Naive thymus-derived CD4-positive, alpha-beta T cell (primary cell): ENCODE measurements at regions of chr3 and their contacts with region 1.

Region 1: GRCh38 chr3:111071257-111072015 is at the start of gene NECTIN3:
- DNase-seq: peak; percentile 59 to 89 (median 80)
- ATAC-seq: peak; percentile 96
- H3K4me3 ChIP-seq: peak within 1 kb of the TSS; percentile 76
- H3K4me3 Mint-ChIP-seq: peak within 1 kb of the TSS; percentile 90 to 98 (median 94)
- H3K27ac ChIP-seq: peak within 1 kb of the TSS; percentile 52
- H3K27ac Mint-ChIP-seq: peak within 1 kb of the TSS; percentile 63 to 91 (median 87)
- H3K4me1 ChIP-seq: peaks cover 9% of the 10 kb centered on the region in 2 donors
- H3K4me1 Mint-ChIP-seq: peaks cover 24 to 34% (median 26%) of the 10 kb centered on the region in 7 donors
- H3K27me3 ChIP-seq: peaks cover 0 to 6% of the 10 kb centered on the region in 2 donors
- H3K27me3 Mint-ChIP-seq: peaks cover 29 to 64% (median 36%) of the 10 kb centered on the region in 5 donors
- total RNA-seq, gene NECTIN3: 2.4 to 7.2 (median 4.6) TPM

Region 2: DNA sequence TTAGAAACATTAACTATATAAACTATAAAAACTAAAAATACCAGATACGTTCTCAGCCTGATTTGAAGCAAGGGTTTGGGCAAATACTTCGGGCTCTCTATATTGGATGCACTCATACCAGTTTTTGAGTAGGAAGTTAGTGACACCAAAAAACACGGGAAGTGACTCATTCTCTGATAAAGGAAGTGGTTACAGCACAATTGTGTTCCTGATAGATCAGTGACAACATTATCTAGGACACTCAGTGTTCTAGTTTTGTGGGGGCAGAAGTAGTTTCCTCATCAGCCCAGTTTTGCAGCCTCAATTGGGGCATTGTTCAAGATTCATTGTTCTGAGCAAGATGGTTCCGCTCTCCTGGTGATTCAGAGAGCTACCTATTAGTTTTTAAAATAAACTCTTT is 1264.5 kb before region 1 on chr3:
- CTCF ChIA-PET with region 1: no interaction called
- POLR2A ChIA-PET with region 1: no interaction called
- intact Hi-C with region 1: loop called in 1 of 2 experiments (anchors 5 kb)
- DNase-seq: peak in 8 of 9 donors; percentile 28 to 76 (median 66)
- ATAC-seq: peak; percentile 94
- H3K4me3 ChIP-seq: peak overlapping the region; percentile 4
- H3K4me3 Mint-ChIP-seq: peak overlapping the region; percentile 14 to 88 (median 76)
- H3K27ac ChIP-seq: peak overlapping the region; percentile 52
- H3K27ac Mint-ChIP-seq: peak overlapping the region; percentile 85 to 97 (median 89)
- H3K4me1 ChIP-seq: peaks cover 29 to 44% of the 10 kb centered on the region in 2 donors
- H3K4me1 Mint-ChIP-seq: peaks cover 18 to 62% (median 46%) of the 10 kb centered on the region in 7 donors
- H3K27me3 ChIP-seq: no peaks in the 10 kb centered on the region
- H3K27me3 Mint-ChIP-seq: peaks cover 0 to 7% (median 0%) of the 10 kb centered on the region in 5 donors

Region 3: DNA sequence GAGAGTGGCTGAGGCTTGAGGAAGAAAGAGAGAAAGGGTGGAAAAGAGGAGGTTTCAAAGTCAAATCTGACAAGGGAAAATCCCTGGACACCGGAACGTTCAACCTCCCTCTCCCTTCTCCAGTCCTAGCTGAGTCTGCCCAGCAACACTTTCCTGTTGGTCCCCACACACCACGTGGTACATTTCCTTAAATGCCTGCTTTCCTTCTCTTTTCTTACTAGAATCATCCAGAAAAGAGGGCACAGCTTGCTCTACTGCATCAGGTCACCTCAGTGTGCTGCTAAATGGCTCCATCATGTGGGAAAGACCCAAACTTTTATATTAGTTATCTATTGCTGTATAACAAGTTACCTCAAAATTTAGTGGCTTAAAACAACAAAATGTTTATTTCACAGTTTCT is 181.3 kb after region 1 on chr3:
- CTCF ChIA-PET with region 1: no interaction called
- POLR2A ChIA-PET with region 1: no interaction called
- intact Hi-C with region 1: loop called in 1 of 2 experiments (anchors 5 kb)
- DNase-seq: no peak
- ATAC-seq: no peak
- H3K4me3 ChIP-seq: no peak overlapping the region
- H3K4me3 Mint-ChIP-seq: no peak overlapping the region
- H3K27ac ChIP-seq: no peak overlapping the region
- H3K27ac Mint-ChIP-seq: no peak overlapping the region
- H3K4me1 ChIP-seq: no peaks in the 10 kb centered on the region
- H3K4me1 Mint-ChIP-seq: peaks cover 0 to 29% (median 5%) of the 10 kb centered on the region in 7 donors
- H3K27me3 ChIP-seq: no peaks in the 10 kb centered on the region
- H3K27me3 Mint-ChIP-seq: peaks cover 0 to 13% (median 0%) of the 10 kb centered on the region in 5 donors

Region 4: DNA sequence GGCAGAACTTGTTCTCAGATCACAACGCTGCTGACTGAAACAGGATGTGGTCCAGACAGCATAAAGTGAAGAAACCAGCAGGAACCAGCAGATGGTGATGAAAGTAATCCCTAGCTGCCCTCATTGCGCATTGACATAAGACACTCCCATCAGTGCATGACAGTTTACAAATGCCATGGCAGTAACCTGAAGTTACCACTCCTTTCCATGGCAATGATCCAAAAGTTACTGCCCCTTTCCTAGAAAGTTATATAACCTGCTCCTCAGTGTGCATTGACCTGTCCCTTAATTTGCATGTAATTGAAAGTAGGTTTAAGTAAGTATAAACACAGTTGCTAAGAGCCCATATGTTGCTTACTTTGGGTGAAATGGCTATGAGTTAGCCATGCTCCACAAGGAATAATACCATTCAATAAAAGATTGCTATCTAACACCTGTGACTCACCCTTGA is 321.5 kb after region 1 on chr3:
- CTCF ChIA-PET with region 1: no interaction called
- POLR2A ChIA-PET with region 1: no interaction called
- intact Hi-C with region 1: loop called in 1 of 2 experiments (anchors 2 kb)
- DNase-seq: peak in 7 of 9 donors; percentile 40 to 78 (median 75)
- ATAC-seq: peak; percentile 99
- H3K4me3 ChIP-seq: no peak overlapping the region
- H3K4me3 Mint-ChIP-seq: peak overlapping the region in 9 of 10 donors; percentile 1 to 59 (median 22)
- H3K27ac ChIP-seq: peak overlapping the region; percentile 25
- H3K27ac Mint-ChIP-seq: peak overlapping the region in 8 of 9 donors; percentile 65 to 96 (median 88)
- H3K4me1 ChIP-seq: peaks cover 0 to 13% of the 10 kb centered on the region in 2 donors
- H3K4me1 Mint-ChIP-seq: peaks cover 10 to 29% (median 23%) of the 10 kb centered on the region in 7 donors
- H3K27me3 ChIP-seq: no peaks in the 10 kb centered on the region
- H3K27me3 Mint-ChIP-seq: no peaks in the 10 kb centered on the region

Region 5: DNA sequence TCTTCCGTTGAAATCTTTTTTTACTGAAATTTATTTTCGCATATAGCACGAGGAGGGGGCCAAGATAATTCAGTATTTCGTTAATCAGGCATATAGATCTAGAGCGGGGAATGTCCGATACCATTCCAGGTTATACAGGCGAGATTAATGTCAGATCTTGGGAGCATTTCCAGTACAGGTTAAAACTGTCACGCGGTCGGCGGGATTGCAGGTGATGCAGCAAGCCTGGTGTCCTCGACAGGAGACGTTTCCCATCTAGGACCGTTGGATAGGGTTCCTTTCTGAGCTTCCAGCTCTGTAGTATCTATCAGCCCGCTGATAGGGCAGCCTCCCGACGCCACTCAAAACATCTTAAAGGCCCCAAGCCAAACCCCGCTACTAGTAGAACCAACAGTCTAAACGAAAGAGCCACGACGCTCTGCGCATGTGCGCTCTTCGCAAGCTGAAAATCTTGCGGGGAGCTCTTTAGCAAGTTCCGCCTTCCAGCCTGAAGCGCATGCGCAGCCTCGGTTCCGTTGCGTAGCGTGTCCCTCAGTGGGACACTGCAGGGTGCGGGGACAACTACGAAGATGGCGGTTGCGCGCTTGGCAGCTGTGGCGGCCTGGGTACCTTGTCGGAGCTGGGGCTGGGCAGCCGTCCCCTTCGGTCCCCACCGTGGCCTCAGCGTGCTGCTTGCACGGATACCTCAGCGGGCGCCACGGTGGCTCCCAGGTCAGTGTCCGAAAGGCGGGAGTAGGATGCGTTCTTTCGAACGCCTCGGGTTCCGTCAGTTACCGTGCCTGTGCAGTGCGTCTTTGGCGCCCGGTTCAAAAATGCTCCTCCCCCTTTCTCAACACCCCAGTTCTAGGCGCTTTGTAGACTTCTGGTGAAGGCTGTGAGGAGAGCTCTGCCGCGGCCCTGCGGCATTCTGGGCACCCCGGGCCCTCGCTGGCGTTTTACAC is 907.3 kb after region 1 on chr3 and contains the start of gene ABHD10:
- CTCF ChIA-PET with region 1: interaction called, 3 read pairs
- POLR2A ChIA-PET with region 1: no interaction called
- intact Hi-C with region 1: loop called (anchors 2 to 5 kb)
- DNase-seq: peak; percentile 90 to 97 (median 93)
- ATAC-seq: peak; percentile 95
- H3K4me3 ChIP-seq: peak within 1 kb of the TSS; percentile 83
- H3K4me3 Mint-ChIP-seq: peak within 1 kb of the TSS; percentile 82 to 97 (median 92)
- H3K27ac ChIP-seq: peak within 1 kb of the TSS; percentile 75
- H3K27ac Mint-ChIP-seq: peak within 1 kb of the TSS; percentile 92 to 96 (median 94)
- H3K4me1 ChIP-seq: peaks cover 16 to 24% of the 10 kb centered on the region in 2 donors
- H3K4me1 Mint-ChIP-seq: peaks cover 19 to 54% (median 44%) of the 10 kb centered on the region in 7 donors
- H3K27me3 ChIP-seq: no peaks in the 10 kb centered on the region
- H3K27me3 Mint-ChIP-seq: peaks cover 0 to 25% (median 0%) of the 10 kb centered on the region in 5 donors
- total RNA-seq, gene ABHD10: 18.4 to 43.6 (median 34.9) TPM

Region 6: GRCh38 chr3:112128843-112129727 is 1057.6 kb after region 1 on chr3:
- CTCF ChIA-PET with region 1: no interaction called
- POLR2A ChIA-PET with region 1: no interaction called
- intact Hi-C with region 1: loop called in 1 of 2 experiments (anchors 2 kb)
- DNase-seq: peak in 8 of 9 donors; percentile 39 to 88 (median 83)
- ATAC-seq: peak; percentile 82
- H3K4me3 ChIP-seq: no peak overlapping the region
- H3K4me3 Mint-ChIP-seq: peak overlapping the region; percentile 23 to 100 (median 64)
- H3K27ac ChIP-seq: peak overlapping the region; percentile 82
- H3K27ac Mint-ChIP-seq: peak overlapping the region; percentile 87 to 95 (median 93)
- H3K4me1 ChIP-seq: peaks cover 41 to 72% of the 10 kb centered on the region in 2 donors
- H3K4me1 Mint-ChIP-seq: peaks cover 49 to 92% (median 90%) of the 10 kb centered on the region in 7 donors
- H3K27me3 ChIP-seq: no peaks in the 10 kb centered on the region
- H3K27me3 Mint-ChIP-seq: no peaks in the 10 kb centered on the region